Right cardiac atrium (tissue), 5 donors: ENCODE measurements at regions of chr17 and their contacts with region 1.

Region 1: GRCh38 chr17:44775136-44775837 is 16.5 kb downstream of the ADAM11 start:
- DNase-seq: peak; percentile 97 to 99 (median 98)
- ATAC-seq: peak; percentile 95
- H3K4me3 ChIP-seq: peak overlapping the region; percentile 35
- H3K27ac ChIP-seq: no peak overlapping the region
- H3K4me1 ChIP-seq: no peaks in the 10 kb centered on the region
- H3K27me3 ChIP-seq: no peaks in the 10 kb centered on the region

Region 2: DNA sequence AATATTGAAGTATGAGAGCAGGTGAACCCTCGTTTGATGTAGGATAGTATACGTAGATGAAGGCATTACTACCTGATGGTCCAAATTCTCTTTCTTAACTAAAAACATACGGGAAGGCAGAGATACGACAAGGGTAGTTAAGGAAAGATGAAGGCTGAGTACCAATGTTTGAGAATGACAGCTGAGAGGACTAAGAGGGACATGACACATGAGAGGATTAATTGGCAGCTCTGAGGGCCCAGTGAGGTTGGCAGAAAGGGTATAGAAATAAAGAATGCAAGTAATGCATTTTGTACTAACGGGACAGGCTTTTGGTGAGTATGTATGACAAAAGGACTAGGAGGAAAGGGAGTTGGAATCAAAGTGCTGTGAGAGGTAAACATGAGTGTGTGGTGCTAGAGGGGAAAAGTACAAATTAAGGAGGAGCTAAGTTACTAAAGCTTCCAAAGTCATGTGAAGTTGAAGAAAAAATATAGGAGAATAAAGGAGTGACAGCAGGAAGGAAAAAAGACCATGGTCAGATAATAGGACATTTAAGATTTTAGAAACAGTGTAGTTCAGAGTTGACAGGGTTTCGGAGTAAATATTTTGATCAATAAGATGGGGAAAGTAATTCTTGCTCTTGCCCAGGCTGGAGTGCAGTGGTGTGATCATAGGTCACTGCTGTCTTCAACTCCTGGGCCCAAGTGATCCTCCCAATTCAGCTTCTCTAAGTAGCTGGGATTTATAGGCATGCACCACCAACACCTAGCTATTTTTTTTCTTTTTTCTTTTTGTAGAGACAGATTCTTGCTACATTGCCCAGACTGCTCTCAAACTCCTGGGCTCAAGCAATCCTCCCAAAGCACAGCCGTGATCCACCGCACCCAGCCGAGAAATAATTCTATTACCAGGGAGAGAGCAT is 342.8 kb before region 1 on chr17:
- intact Hi-C with region 1: no loop called
- DNase-seq: no peak
- ATAC-seq: peak in 1 of 2 donors; percentile 33
- H3K4me3 ChIP-seq: no peak overlapping the region
- H3K27ac ChIP-seq: peak overlapping the region; percentile 50
- H3K4me1 ChIP-seq: no peaks in the 10 kb centered on the region
- H3K27me3 ChIP-seq: no peaks in the 10 kb centered on the region

Region 3: DNA sequence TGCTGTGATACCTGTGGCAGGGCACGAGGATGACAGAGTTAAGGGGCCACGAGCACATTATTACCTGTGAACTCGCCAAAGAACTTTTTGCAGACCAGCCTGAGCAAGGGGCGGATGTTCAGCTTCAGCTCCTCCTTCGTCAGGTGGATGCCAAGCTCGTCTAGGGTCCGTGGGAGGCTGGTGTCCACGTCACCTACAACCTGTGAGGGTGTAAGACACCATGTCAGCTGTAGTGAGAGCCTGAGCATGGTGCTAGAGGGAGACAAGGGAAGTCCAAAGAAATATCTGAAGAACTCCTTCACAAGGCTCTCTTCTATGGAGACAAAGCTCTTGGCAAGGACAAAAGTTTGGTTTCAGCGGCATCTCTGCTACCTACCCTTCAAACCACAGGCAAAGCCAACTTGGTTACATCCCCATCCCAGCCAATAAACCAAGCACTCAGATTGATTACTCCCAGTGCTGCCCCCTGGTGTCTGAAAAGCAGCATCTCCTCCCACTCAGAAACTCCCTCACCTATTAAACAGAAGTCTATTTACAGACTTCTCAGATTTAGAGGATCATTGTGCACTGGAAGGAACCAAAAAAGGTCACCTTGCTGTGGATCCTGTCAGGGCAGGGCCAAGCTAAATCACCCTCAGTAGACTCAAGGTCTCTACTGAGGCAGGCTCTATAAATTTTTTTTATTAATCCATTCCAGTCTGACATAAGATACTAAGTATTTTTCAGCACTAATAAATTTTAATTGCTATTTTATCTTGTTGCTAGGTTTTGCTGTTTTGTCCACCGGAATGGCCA is 89.8 kb after region 1 on chr17:
- intact Hi-C with region 1: loop called (anchors 2 to 5 kb)
- DNase-seq: peak; percentile 56 to 78 (median 65)
- ATAC-seq: peak; percentile 56 to 67
- H3K4me3 ChIP-seq: no peak overlapping the region
- H3K27ac ChIP-seq: no peak overlapping the region
- H3K4me1 ChIP-seq: no peaks in the 10 kb centered on the region
- H3K27me3 ChIP-seq: no peaks in the 10 kb centered on the region

Region 4: GRCh38 chr17:44878627-44879221 is 103.4 kb after region 1 on chr17:
- intact Hi-C with region 1: loop called in 2 of 4 experiments (anchors 2 to 5 kb)
- DNase-seq: no peak
- ATAC-seq: no peak
- H3K4me3 ChIP-seq: no peak overlapping the region
- H3K27ac ChIP-seq: no peak overlapping the region
- H3K4me1 ChIP-seq: no peaks in the 10 kb centered on the region
- H3K27me3 ChIP-seq: no peaks in the 10 kb centered on the region

Region 5: GRCh38 chr17:44894642-44895041 is 119.4 kb after region 1 on chr17:
- intact Hi-C with region 1: no loop called
- DNase-seq: no peak
- ATAC-seq: no peak
- H3K4me3 ChIP-seq: no peak overlapping the region
- H3K27ac ChIP-seq: no peak overlapping the region
- H3K4me1 ChIP-seq: no peaks in the 10 kb centered on the region
- H3K27me3 ChIP-seq: no peaks in the 10 kb centered on the region

Region 6: DNA sequence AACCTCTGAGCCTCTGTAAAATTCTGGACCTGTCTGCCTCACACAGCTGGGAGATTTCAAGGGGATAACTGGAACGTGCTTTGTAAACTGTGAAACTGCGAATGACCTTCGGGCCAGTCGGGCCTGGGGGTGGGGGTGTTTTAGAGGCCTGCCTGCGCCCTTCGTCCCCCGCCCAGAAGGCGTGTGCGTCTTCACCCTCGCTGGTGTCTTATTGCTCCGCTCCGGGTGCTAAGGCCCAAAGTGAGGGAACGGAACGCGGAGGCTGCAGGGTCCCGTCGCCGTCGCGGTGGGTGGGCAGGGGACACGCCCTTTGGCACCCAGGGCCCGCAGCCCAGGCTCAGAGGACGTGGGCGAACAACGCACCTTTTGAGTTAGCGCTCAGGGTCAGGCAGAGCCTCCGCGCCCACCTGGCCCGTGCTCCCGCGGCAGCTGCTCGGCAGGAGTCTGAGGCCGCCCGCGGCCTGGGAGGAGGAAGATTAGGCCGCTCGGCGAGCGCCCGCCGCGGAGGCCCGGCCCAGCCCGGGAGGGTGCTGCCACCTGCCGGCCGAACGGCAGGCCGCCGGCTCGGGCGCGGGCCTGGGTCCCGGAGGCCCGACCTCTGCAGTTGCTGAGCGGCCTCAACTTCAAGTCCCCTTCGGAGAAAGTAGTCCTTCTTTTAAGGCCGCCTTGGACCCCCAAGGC is 246.5 kb after region 1 on chr17:
- intact Hi-C with region 1: loop called in 2 of 4 experiments (anchors 10 kb)
- DNase-seq: peak; percentile 69 to 91 (median 89)
- ATAC-seq: peak; percentile 83 to 85
- H3K4me3 ChIP-seq: peak overlapping the region; percentile 2
- H3K27ac ChIP-seq: peak overlapping the region; percentile 5
- H3K4me1 ChIP-seq: peaks cover 17% of the 10 kb centered on the region
- H3K27me3 ChIP-seq: no peaks in the 10 kb centered on the region